ENCODE measurements at regions of chr15 and their contacts with region 1.

Region 1: DNA sequence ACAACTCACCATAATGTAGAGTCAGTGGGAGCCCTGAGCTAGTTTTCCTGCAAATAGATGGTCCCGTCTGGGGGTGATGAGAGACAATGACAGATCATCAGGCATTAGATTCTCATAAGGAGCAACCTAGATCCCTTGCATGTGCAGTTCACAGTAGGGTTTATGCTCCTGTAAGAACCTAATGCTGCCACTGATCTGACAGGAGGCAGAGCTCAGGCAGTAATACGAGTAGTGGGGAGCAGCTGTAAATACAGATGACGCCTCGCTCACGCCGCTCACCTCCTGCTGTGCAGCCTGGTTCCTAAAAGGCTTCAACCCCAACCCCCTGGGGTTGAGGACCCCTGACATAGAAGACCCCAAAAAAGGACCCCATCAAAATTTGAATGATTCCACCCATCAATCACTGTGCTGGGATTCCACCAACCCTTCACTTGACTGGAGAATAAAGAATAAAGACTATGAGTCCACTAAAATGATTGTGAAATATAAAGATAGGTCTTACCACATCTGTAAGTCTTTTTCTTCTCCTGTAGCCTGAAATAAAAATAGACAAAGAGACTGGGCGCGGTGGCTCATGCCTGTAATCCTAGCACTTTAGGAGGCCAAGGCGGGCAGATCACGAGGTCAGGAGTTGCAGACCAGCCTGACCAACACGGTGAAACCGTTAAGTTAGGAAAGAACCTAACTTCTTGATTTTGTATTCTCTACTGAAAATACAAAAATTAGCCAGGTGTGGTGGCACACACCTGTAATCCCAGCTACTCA is 9.9 kb upstream of the UBL7 start:
- DNase-seq: no peak
- ATAC-seq: no peak
- H3K4me3 ChIP-seq: no peak overlapping the region
- H3K27ac ChIP-seq: no peak overlapping the region
- H3K4me1 ChIP-seq: no peaks in the 10 kb centered on the region
- H3K27me3 ChIP-seq: no peaks in the 10 kb centered on the region
- CTCF ChIP-seq: no peak

Region 2: DNA sequence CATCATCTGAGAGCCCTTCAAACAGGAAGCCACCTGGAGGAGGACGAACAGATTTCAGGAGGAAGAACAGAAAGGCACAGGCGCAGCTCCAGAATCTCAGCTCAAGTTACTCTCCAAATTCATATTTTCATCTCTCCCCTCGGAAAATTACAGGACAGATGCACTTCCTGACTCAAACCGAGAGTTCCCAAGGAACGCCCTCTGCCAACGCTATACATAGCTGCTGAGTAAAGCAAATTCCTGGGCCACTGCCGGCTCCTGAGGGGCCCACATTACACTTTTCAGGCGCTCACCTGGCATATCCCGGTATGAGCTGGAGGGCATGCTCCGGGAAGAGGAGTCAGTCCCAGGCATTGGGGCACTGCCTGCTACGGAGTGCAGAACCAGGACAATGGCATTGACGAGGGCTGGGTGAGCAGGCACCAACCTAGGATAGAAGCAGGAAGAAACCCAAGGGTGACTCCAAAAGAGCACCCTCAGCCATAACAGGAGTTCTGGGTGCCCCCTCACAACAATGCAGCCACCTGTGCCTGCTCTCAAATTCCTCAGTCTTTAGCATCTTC is 21.1 kb before region 1 on chr15:
- intact Hi-C with region 1: loop called in 1 of 10 experiments (anchors 2 kb)
- DNase-seq: no peak
- ATAC-seq: no peak
- H3K4me3 ChIP-seq: no peak overlapping the region
- H3K27ac ChIP-seq: no peak overlapping the region
- H3K4me1 ChIP-seq: peaks cover 0 to 15% (median 5%) of the 10 kb centered on the region in 9 donors
- H3K27me3 ChIP-seq: no peaks in the 10 kb centered on the region
- CTCF ChIP-seq: no peak